ENCODE measurements at regions of chr2 and their contacts with region 1.

Region 1: GRCh38 chr2:208373460-208374089 is 33.0 kb upstream of the PTH2R start:
- DNase-seq: peak; percentile 35
- H3K4me3 Mint-ChIP-seq: no peak overlapping the region
- H3K27ac Mint-ChIP-seq: no peak overlapping the region
- H3K4me1 Mint-ChIP-seq: no peaks in the 10 kb centered on the region
- H3K27me3 Mint-ChIP-seq: no peaks in the 10 kb centered on the region
- CTCF ChIP-seq: peak; percentile 78

Region 2: DNA sequence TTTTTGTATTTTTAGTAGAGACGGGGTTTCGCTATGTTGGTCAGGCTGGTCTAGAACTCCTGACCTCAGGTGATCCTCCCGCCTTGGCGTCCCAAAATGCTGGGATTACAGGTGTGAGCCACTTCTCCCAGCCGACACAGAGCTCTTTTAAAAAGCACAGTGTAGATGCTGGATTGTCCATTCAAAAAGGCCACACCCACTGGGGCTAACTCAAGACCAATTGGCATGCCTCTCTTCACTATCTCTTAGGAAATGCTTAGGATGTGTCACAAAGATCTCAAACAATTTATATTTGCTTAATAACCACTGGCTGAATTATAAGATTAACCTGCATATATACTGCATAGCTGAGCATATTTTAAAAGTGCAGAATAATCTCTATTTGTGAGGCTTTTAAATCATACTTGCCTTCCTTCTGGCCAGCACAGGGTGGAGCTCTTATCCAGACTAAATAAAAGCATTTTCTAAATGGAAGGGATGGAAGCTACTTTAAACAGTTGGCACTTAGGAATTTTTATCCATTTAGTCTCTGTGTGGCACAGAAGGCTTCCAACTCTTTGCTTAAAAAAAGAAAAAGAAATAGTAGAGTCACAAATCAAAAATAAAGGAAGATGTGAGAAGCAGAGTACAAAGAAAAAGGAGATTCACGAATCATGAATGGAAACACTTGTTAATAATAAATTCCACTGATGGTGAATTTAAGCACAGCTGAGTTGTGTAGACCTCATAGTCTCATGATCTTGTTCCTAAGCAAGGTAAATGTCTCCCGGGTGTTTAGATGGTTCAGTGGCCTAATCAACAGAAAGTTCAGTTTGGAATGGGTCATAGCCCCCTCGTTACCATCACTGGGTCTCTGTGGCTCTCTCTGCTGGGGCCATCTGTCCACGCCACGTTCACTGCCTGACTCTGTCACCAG is 271.6 kb before region 1 on chr2:
- CTCF ChIA-PET with region 1: no interaction called
- intact Hi-C with region 1: loop called (anchors 5 kb)
- DNase-seq: peak; percentile 10
- H3K4me3 Mint-ChIP-seq: peak overlapping the region; percentile 14
- H3K27ac Mint-ChIP-seq: no peak overlapping the region
- H3K4me1 Mint-ChIP-seq: peaks cover 17% of the 10 kb centered on the region
- H3K27me3 Mint-ChIP-seq: peaks cover 10% of the 10 kb centered on the region
- CTCF ChIP-seq: no peak

Region 3: GRCh38 chr2:208501206-208501799 is 127.7 kb after region 1 on chr2:
- CTCF ChIA-PET with region 1: no interaction called
- intact Hi-C with region 1: no loop called
- DNase-seq: peak; percentile 28
- H3K4me3 Mint-ChIP-seq: peak overlapping the region; percentile 18
- H3K27ac Mint-ChIP-seq: no peak overlapping the region
- H3K4me1 Mint-ChIP-seq: peaks cover 12% of the 10 kb centered on the region
- H3K27me3 Mint-ChIP-seq: no peaks in the 10 kb centered on the region
- CTCF ChIP-seq: no peak

Measured in Calu3 (cell line).